ENCODE measurements at regions of chr4 and their contacts with region 1.

Region 1: DNA sequence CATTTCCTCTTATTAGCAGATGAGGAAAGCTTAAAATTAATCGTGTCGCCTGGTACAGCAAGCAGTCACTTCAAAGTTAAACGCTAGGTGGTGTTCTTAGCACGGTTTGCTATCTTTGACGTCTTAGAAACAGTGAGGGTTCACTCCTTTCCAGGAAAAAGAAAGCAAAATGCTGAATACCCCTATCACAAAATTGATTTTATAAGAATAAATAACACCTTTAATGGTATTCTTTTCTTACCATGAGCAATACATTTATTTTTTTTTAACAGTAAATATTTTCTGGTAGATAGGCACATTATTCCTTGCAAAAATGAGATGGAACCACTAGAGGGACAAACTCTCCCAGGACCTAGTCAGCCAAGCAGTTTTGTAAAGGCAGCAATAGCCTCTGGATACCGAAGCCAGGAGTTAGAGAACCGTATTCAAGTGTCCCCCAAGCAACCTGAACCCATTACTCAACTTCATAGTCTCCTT is 153.9 kb downstream of the KDR start:
- DNase-seq: no peak
- H3K4me3 ChIP-seq: no peak overlapping the region
- CTCF ChIP-seq: peak; percentile 60

Region 2: GRCh38 chr4:55312489-55313101 is 341.1 kb after region 1 on chr4:
- CTCF ChIA-PET with region 1: interaction called, 263 read pairs
- POLR2A ChIA-PET with region 1: no interaction called
- DNase-seq: no peak
- H3K4me3 ChIP-seq: no peak overlapping the region
- CTCF ChIP-seq: peak; percentile 72

Region 3: DNA sequence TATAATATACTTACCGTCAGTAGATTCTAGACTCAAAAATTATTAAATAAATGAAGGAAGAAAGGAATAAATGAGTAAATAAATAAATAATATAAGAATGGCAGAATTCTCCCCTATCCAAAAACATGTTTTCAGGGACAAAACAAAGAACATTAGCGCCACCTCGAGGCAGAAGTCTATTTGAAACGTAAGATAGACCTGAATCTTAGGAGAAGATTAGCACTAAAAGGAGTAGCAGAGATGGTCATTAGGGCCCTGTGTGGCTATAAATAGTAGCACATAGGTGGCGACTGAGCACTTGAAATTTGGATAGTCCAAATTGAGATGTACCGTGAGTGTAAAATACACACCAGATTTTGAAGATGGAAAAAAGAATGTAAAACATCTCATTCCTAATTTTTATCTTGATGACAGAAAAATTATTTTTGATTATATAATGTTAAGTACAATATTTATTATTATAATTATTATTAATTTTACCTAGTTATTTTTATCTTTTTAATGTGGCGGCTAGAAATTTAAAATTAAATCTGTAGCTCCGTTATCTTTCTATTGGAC is 350.3 kb after region 1 on chr4:
- CTCF ChIA-PET with region 1: interaction called, 263 read pairs
- POLR2A ChIA-PET with region 1: no interaction called
- DNase-seq: no peak
- H3K4me3 ChIP-seq: no peak overlapping the region
- CTCF ChIP-seq: peak; percentile 48

Region 4: GRCh38 chr4:55330241-55330640 is 358.7 kb after region 1 on chr4:
- CTCF ChIA-PET with region 1: interaction called, 263 read pairs
- POLR2A ChIA-PET with region 1: no interaction called
- DNase-seq: no peak
- H3K4me3 ChIP-seq: no peak overlapping the region
- CTCF ChIP-seq: no peak